SK-N-SH (cell line): ENCODE measurements at regions of chr7 and their contacts with region 1.

Region 1: DNA sequence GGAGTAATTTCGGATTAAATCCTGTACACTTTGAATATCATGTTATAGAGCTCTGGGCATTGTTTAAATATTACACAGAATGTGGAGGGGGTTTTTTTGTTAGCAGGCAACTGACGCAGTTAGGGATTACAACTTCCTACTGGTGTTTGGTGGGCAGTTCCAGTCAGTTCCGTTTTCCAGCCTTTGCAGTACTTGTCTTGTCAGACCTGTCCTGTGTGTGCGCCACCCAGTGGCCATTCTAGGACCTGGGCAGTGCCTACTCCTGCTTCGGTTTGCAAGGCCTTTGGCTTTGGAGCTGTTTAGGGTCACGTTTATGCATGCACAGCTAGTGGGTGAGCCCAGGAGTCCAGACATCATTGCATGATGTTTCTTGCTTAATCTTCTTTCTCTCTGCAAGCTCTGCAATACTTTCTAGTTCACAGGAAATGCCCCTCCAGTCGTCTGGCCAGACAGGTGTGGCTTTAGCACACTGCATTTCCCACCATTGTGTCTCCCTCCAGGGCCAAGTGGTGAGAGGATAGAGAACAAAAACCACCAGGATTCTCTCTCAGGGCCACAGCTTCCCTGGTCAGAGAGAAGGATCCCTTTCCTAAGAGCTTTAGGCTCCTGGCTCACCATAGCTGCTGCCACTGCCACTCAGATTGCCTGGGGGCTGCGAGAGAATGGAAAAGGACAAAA is 96.5 kb upstream of the TARP start:
- DNase-seq: peak; percentile 74
- H3K4me3 ChIP-seq: no peak overlapping the region; a peak in 1 of 4 replicates
- H3K27ac ChIP-seq: peak overlapping the region in 1 of 2 experiments; percentile 23; a peak in 1 of 4 replicates
- H3K4me1 ChIP-seq: peaks cover 0 to 16% of the 10 kb centered on the region in 2 experiments; a peak in 2 of 4 replicates
- H3K27me3 ChIP-seq: no peaks in the 10 kb centered on the region; the same call in 1 of the 2 replicates
- CTCF ChIP-seq: peak; percentile 98
- EP300 ChIP-seq: no peak
- RAD21 ChIP-seq: peak; percentile 55

Region 2: DNA sequence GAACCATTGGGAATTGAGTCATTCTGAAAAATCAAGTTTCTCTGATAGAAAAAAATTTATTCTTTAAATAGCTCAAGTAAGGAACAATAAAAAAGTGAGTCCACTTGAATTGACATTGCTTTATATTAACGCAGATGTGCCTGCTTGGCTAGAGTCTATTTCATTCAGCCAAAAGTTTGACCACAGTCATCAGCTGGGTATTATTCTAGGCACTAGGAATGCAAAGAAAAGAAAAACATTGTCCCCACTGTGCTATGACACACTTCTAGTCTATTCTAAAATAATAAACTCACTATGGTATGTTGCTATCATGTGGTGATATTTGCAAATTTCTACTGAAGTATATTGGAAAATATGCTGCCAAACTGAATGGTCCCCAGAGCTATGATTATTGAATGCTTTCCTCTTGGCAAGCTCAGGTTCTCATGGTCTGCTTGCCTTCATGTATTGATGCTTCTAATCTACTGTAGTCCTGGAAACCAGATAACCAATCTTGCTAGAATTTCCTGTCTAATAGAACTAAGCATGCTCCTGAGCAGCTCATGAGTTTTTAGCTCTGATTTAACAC is 461.6 kb before region 1 on chr7:
- CTCF ChIA-PET with region 1: interaction called, 56 read pairs
- POLR2A ChIA-PET with region 1: no interaction called
- DNase-seq: no peak
- H3K4me3 ChIP-seq: no peak overlapping the region
- H3K27ac ChIP-seq: no peak overlapping the region; a peak in 2 of 4 replicates
- H3K4me1 ChIP-seq: no peaks in the 10 kb centered on the region; a peak in 1 of 4 replicates
- H3K27me3 ChIP-seq: no peaks in the 10 kb centered on the region
- CTCF ChIP-seq: no peak
- EP300 ChIP-seq: no peak
- RAD21 ChIP-seq: no peak

Region 3: GRCh38 chr7:38222481-38223096 is 147.4 kb before region 1 on chr7:
- CTCF ChIA-PET with region 1: interaction called, 77 read pairs
- POLR2A ChIA-PET with region 1: no interaction called
- DNase-seq: peak; percentile 50
- H3K4me3 ChIP-seq: no peak overlapping the region; a peak in 1 of 4 replicates
- H3K27ac ChIP-seq: no peak overlapping the region
- H3K4me1 ChIP-seq: no peaks in the 10 kb centered on the region
- H3K27me3 ChIP-seq: no peaks in the 10 kb centered on the region
- CTCF ChIP-seq: peak; percentile 98
- EP300 ChIP-seq: no peak
- RAD21 ChIP-seq: peak; percentile 93

Region 4: DNA sequence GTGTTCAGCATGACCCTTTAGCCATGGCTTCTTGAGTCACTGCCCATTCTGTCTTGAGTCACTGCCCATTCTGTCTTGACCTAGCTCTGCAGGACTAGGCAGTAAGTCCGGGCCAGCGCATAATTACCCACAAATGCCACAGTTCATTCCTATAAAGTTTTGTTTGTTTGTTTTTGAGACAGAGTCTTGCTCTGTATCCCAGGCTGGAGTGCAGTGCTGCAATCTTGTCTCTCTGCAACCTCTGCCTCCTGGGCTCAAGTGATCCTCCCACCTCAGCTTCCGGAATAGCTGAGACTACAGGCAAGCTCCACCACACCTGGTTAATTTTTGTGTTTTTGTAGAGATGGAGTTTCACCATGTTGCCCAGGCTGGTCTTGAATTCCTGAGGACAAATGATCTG is 63.8 kb before region 1 on chr7:
- CTCF ChIA-PET with region 1: interaction called, 20 read pairs
- POLR2A ChIA-PET with region 1: no interaction called
- DNase-seq: no peak
- H3K4me3 ChIP-seq: no peak overlapping the region
- H3K27ac ChIP-seq: no peak overlapping the region
- H3K4me1 ChIP-seq: peaks cover 0 to 5% of the 10 kb centered on the region in 2 experiments; a peak in 1 of 4 replicates
- H3K27me3 ChIP-seq: peaks cover 17% of the 10 kb centered on the region; the same call in 1 of the 2 replicates
- CTCF ChIP-seq: no peak
- EP300 ChIP-seq: no peak
- RAD21 ChIP-seq: no peak

Region 5: GRCh38 chr7:38351601-38352000 is 18.4 kb before region 1 on chr7:
- CTCF ChIA-PET with region 1: interaction called, 11 read pairs
- POLR2A ChIA-PET with region 1: no interaction called
- DNase-seq: no peak
- H3K4me3 ChIP-seq: no peak overlapping the region
- H3K27ac ChIP-seq: no peak overlapping the region
- H3K4me1 ChIP-seq: no peaks in the 10 kb centered on the region
- H3K27me3 ChIP-seq: no peaks in the 10 kb centered on the region
- CTCF ChIP-seq: no peak
- EP300 ChIP-seq: no peak
- RAD21 ChIP-seq: no peak